SK-N-SH (cell line): ENCODE measurements at regions of chr7 and their contacts with region 1.

Region 1: GRCh38 chr7:100803398-100804233 is 23.7 kb downstream of the EPHB4 start:
- DNase-seq: peak; percentile 93
- H3K4me3 ChIP-seq: no peak overlapping the region
- H3K27ac ChIP-seq: peak overlapping the region; percentile 53 to 58
- H3K4me1 ChIP-seq: peaks cover 21% of the 10 kb centered on the region in 2 experiments; a peak in 3 of 4 replicates
- H3K27me3 ChIP-seq: no peaks in the 10 kb centered on the region
- CTCF ChIP-seq: no peak
- EP300 ChIP-seq: peak in 1 of 2 experiments; percentile 26; a peak in 1 of 4 replicates
- RAD21 ChIP-seq: no peak

Region 2: DNA sequence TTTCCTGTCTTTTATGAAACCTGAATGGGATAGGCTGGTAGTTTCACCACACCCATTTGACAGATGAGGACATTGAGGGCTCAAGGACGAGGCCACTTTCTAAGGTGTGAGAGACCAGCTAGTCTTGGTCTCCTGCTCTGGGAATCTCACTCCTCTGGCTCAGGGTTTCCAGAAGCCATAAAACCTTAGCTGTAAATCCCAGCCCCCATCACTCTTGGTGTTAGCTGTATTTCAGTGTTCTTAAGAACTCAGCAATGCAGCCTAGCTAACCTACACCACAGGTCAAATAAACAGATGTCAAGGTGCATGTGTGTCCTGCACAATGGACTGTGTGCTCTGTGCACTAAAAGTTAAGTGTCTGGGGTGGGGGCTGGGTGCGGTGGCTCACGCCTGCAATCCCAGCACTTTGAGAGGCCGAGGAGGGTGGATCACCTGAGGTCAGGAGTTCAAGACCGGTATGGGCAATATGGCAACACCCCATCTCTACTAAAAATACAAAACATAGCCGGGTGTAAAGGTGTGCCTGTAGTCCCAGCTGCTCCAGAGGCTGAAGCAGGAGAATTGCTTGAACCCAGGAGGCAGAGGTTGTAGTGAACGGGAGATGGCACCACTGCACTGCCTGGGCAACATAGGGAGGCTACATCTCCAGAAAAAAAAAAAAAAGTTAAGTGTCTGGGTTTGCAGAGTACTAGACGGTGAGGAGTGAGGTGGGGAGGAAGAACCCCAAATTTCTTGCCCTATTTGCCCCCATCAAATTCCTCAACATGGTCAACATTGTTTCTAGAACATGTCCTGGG is 83.9 kb before region 1 on chr7:
- CTCF ChIA-PET with region 1: interaction called, 12 read pairs
- POLR2A ChIA-PET with region 1: no interaction called
- DNase-seq: no peak
- H3K4me3 ChIP-seq: 0 out of 4 replicates have a peak overlapping the region, but pooled peaks of 1 of the 2 experiments have one; percentile 29
- H3K27ac ChIP-seq: no peak overlapping the region
- H3K4me1 ChIP-seq: peaks cover 0 to 3% of the 10 kb centered on the region in 2 experiments; a peak in 1 of 4 replicates
- H3K27me3 ChIP-seq: peaks cover 28% of the 10 kb centered on the region
- CTCF ChIP-seq: peak; percentile 47
- EP300 ChIP-seq: no peak
- RAD21 ChIP-seq: peak; percentile 56

Region 3: GRCh38 chr7:100726996-100727761 is 76.4 kb before region 1 on chr7:
- CTCF ChIA-PET with region 1: interaction called, 12 read pairs
- POLR2A ChIA-PET with region 1: no interaction called
- DNase-seq: no peak
- H3K4me3 ChIP-seq: no peak overlapping the region
- H3K27ac ChIP-seq: no peak overlapping the region
- H3K4me1 ChIP-seq: no peaks in the 10 kb centered on the region; a peak in 1 of 4 replicates
- H3K27me3 ChIP-seq: peaks cover 4% of the 10 kb centered on the region; the same call in 1 of the 2 replicates
- CTCF ChIP-seq: no peak
- EP300 ChIP-seq: no peak
- RAD21 ChIP-seq: no peak

Region 4: GRCh38 chr7:100773491-100773890 is 30.1 kb before region 1 on chr7:
- CTCF ChIA-PET with region 1: interaction called, 16 read pairs
- POLR2A ChIA-PET with region 1: no interaction called
- DNase-seq: no peak
- H3K4me3 ChIP-seq: no peak overlapping the region
- H3K27ac ChIP-seq: no peak overlapping the region
- H3K4me1 ChIP-seq: no peaks in the 10 kb centered on the region
- H3K27me3 ChIP-seq: peaks cover 76% of the 10 kb centered on the region
- CTCF ChIP-seq: no peak
- EP300 ChIP-seq: no peak
- RAD21 ChIP-seq: no peak

Region 5: GRCh38 chr7:100819551-100819950 is 15.9 kb after region 1 on chr7:
- CTCF ChIA-PET with region 1: interaction called, 220 read pairs
- POLR2A ChIA-PET with region 1: interaction called, 6 read pairs
- DNase-seq: peak; percentile 42
- H3K4me3 ChIP-seq: no peak overlapping the region
- H3K27ac ChIP-seq: no peak overlapping the region
- H3K4me1 ChIP-seq: peaks cover 0 to under 1% of the 10 kb centered on the region in 2 experiments; a peak in 1 of 4 replicates
- H3K27me3 ChIP-seq: no peaks in the 10 kb centered on the region
- CTCF ChIP-seq: no peak
- EP300 ChIP-seq: no peak
- RAD21 ChIP-seq: no peak

Region 6: DNA sequence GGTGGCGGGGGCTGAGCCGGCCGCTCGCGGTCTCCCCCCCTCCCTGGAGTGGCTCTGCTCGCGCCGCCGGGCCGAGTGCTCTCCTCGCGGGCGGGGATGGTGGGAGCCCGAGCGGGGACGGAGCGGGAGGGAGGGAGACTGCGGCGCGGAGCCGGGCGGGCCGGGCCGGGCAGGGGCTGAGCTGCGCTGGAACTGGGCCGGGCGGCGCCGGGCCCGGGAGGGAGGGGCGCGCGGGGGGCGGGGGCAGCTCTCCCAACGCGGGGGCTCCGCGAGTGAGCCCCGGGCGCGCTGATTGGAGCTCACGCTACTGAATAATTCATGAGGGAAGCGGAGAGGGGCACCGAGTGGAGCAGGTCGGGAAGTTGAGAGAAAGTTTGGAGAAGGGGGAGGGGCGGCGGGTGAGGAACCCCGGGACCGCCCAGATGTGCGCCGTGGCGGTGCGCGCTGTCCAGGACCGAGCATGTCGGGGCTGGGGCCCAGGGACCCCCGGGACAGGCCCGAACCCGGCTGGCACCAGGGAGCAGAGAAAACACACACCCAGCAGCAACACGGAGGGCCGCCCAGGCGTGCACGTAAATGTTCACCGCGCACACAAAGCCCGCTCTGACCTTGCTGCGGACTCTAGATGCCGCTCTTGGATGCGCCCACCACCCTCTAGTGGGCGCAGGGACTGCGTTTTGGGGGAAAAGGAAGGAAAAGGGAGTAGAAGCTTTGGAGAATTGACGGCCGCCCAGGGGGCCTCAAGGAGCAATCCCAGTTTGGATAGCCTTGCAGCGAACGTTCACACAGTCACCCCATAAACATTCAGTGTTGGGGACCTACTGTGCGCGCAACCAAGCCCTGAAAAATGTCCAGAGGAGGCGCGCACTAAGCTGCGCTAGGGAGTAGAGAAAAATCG is 24.0 kb after region 1 on chr7 and contains the start of gene EPHB4:
- CTCF ChIA-PET with region 1: interaction called, 220 read pairs
- POLR2A ChIA-PET with region 1: interaction called, 3 read pairs
- DNase-seq: peak; percentile 88
- H3K4me3 ChIP-seq: peak within 1 kb of the TSS; percentile 65 to 78
- H3K27ac ChIP-seq: peak within 1 kb of the TSS; percentile 17 to 35
- H3K4me1 ChIP-seq: peaks cover 6 to 22% of the 10 kb centered on the region in 2 experiments; a peak in 2 of 4 replicates
- H3K27me3 ChIP-seq: no peaks in the 10 kb centered on the region
- CTCF ChIP-seq: peak; percentile 76
- EP300 ChIP-seq: no peak
- RAD21 ChIP-seq: peak; percentile 55
- polyA plus RNA-seq, gene EPHB4: 51.1 and 64.4 TPM in 2 replicates